Endothelial cell of umbilical vein (primary cell): ENCODE measurements at regions of chr17 and their contacts with region 1.

Region 1: DNA sequence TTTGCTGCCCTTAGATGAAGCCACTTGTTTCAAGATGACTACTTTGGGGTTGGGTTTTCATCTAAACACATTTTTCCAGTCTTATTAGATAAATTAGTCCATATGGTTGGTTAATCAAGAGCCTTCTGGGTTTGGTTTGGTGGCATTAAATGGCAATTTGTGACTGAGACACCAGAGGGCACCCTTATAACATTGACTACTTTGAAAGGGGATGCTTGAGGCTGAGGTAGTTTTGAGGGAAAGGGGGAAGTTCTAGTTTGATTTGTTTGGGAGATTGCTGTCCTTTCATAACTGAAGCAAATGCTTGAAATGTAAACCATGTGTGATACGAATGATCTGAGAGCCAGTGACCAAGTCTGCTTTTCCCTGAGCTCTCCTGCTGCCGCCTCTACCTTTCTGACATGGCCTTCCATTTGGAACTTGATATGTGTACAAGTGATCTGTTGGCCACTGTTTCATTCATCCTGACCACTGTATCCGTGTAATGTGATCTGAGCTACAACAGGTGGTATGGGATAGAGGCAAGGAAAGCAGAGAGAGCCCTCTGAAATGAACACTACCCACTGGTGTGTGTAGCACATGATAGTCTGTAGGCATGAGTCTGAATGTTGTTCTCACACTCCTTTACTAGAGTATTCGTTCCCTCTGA is 5.8 kb upstream of the RARA start:
- DNase-seq: peak; percentile 85
- H3K4me3 ChIP-seq: no peak overlapping the region
- H3K27ac ChIP-seq: no peak overlapping the region
- H3K4me1 ChIP-seq: peaks cover 19% of the 10 kb centered on the region
- H3K27me3 ChIP-seq: no peaks in the 10 kb centered on the region
- CTCF ChIP-seq: peak; percentile 55 to 66
- POLR2A ChIP-seq: no peak

Region 2: GRCh38 chr17:40317880-40318829 is 15.0 kb after region 1 on chr17:
- CTCF ChIA-PET with region 1: interaction called, 107 read pairs
- POLR2A ChIA-PET with region 1: no interaction called
- dilution Hi-C with region 1: no loop called
- intact Hi-C with region 1: loop called (anchors 1 kb)
- DNase-seq: peak; percentile 96
- H3K4me3 ChIP-seq: peak overlapping the region; percentile 63 to 66 (median 65)
- H3K27ac ChIP-seq: peak overlapping the region; percentile 83
- H3K4me1 ChIP-seq: peaks cover 72% of the 10 kb centered on the region
- H3K27me3 ChIP-seq: no peaks in the 10 kb centered on the region
- CTCF ChIP-seq: no peak
- POLR2A ChIP-seq: peak; percentile 75

Region 3: DNA sequence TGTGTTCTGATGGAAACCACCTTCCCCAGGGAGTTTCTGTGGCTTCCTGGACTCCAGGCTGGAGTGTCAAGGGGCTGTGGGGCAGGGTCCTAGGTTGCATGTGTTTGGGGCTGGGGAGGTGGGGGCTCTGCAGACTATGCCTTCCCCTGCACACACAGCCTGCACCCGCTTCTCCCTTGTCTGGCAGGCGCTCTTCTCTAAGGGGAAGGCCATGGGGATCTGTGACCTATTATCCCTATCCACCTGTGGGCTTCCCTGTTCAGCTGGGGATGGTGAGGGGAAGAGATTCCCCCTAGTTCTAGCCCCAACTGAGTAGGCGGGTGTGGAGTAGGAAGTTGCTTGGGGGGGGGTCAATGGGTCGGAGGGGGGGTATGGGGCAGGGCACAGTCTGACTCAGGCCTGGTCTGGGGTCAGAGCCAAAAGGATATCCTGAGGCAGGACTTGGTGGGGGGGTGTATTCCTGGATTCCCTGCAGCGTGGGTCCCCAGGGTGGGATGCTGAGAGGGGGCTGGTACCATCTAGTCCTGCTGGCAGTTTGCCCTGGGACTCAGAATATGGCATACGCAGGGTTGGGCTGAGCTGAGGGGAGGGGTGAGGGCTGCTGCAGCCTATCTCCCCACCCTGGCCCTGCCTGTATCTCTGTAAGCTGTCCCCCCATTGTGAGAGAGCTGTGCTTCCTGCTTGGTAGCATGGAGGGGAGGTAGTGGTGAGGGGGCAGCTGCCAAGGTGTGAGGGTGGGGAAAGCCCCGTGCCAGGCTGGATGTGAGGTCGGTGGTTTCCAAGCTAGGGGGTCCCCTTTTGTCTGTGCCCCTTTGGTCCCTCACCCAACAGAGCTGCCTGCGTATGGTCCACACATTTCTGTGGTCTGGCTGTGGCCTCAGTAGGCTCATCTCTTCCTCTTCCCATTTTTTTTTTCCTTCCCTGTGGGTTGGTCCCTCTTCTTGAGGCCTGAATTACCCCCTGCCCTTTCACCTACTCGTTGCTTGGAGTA is 20.6 kb after region 1 on chr17:
- CTCF ChIA-PET with region 1: interaction called, 107 read pairs
- POLR2A ChIA-PET with region 1: no interaction called
- dilution Hi-C with region 1: no loop called
- intact Hi-C with region 1: no loop called
- DNase-seq: peak; percentile 79
- H3K4me3 ChIP-seq: no peak overlapping the region
- H3K27ac ChIP-seq: peak overlapping the region; percentile 95
- H3K4me1 ChIP-seq: peaks cover 74% of the 10 kb centered on the region
- H3K27me3 ChIP-seq: no peaks in the 10 kb centered on the region
- CTCF ChIP-seq: no peak
- POLR2A ChIP-seq: no peak

Region 4: GRCh38 chr17:40340880-40341807 is 38.0 kb after region 1 on chr17:
- CTCF ChIA-PET with region 1: interaction called, 45 read pairs
- POLR2A ChIA-PET with region 1: no interaction called
- dilution Hi-C with region 1: no loop called
- intact Hi-C with region 1: loop called (anchors 1 kb)
- DNase-seq: peak; percentile 73
- H3K4me3 ChIP-seq: peak overlapping the region; percentile 65 to 76 (median 69)
- H3K27ac ChIP-seq: peak overlapping the region; percentile 88
- H3K4me1 ChIP-seq: peaks cover 36% of the 10 kb centered on the region
- H3K27me3 ChIP-seq: no peaks in the 10 kb centered on the region
- CTCF ChIP-seq: no peak
- POLR2A ChIP-seq: peak; percentile 53

Region 5: DNA sequence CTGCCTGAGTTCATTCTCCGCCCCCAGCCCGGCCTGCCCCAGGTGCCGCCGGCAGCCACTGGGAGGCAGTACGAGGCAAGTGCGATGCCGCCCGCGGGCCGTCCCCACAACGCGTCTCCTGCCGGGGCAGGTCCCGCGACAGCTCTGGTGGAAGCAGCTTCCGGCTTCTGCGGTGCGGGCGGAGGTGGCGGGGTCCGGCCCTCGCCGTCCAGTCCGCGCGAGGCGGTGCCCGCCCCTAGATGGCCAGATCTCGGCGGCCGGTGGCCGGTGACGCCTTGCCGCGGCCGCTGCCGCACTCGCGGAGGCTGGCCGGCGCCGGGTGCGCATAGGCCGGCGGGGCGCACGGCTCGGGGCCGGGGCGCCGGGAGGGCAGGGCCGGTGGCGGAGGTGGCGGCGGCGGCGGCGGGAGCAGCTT is 59.6 kb after region 1 on chr17:
- CTCF ChIA-PET with region 1: interaction called, 530 read pairs
- POLR2A ChIA-PET with region 1: interaction called, 3 read pairs
- dilution Hi-C with region 1: no loop called
- intact Hi-C with region 1: no loop called
- DNase-seq: peak; percentile 71
- H3K4me3 ChIP-seq: peak overlapping the region in 1 of 3 experiments; percentile 41
- H3K27ac ChIP-seq: no peak overlapping the region
- H3K4me1 ChIP-seq: peaks cover 7% of the 10 kb centered on the region
- H3K27me3 ChIP-seq: no peaks in the 10 kb centered on the region
- CTCF ChIP-seq: peak; percentile 85 to 88
- POLR2A ChIP-seq: no peak